Colonic mucosa (tissue), 4 donors: ENCODE measurements at regions of chr3 and their contacts with region 1.

Region 1: DNA sequence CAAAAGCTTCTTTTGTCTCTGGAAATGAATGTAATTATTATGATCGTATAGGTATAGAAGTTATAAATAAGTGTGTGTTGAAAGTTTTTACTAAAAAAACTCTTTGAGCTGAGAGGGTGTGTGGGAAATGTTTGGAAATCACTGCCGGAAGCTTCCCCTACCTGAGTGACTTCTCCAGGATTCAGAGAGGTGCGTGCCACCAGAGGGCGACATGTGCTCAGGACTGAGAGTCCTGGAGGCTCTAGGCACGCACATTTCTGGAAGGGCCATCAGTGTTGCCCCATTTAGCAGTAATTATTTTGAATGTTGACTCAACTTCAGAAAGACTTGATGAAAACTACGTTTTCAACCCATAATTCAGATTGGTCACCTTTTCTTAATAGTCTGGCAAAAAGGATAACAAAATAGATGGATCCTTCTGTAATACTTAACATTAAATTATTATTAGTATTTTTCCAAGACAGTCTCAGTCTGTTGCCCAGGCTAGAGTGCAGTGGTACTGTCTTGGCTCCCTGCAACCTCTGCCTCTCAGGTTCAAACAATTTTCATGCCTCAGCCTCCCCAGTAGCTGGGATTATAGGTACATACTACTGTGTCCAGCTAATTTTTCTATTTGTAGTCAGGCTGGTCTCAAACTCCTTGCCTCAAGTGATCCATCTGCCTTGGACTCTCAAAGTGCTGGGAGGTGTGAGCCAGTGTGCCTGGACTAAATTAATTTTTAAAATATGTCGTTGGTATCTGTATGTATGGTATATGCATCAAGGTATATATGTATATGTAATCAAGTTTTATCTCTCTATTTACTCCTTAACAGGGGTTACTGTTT is 34.5 kb downstream of the GPR171 start:
- DNase-seq: peak; percentile 89
- H3K4me3 ChIP-seq: no peak overlapping the region
- H3K27ac ChIP-seq: no peak overlapping the region
- H3K4me1 ChIP-seq: no peaks in the 10 kb centered on the region
- H3K27me3 ChIP-seq: no peaks in the 10 kb centered on the region
- CTCF ChIP-seq: peak; percentile 86

Region 2: GRCh38 chr3:151227807-151228665 is 59.6 kb after region 1 on chr3:
- intact Hi-C with region 1: loop called (anchors 5 kb)
- DNase-seq: peak; percentile 81
- H3K4me3 ChIP-seq: no peak overlapping the region
- H3K27ac ChIP-seq: peak overlapping the region; percentile 34
- H3K4me1 ChIP-seq: no peaks in the 10 kb centered on the region
- H3K27me3 ChIP-seq: no peaks in the 10 kb centered on the region
- CTCF ChIP-seq: peak; percentile 89

Region 3: DNA sequence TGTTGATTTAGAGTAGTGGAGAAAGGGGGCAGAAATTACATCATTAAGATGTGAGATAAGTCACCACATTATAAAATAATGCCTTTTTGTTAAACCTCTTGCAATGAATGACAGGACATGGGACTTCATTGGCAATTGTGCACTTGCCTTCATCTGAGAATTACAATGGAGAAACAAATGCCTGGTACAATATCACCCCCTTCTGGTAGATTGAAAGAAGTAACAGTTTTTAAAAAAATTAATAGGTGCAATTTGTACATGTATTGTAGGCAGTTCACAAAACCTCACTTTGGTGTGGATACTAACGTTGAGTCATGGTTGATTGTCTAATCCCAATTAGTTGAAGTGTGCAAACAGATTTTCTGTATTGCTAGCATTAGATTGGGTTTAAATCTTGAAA is 114.4 kb after region 1 on chr3:
- intact Hi-C with region 1: loop called (anchors 2 kb)
- DNase-seq: no peak
- H3K4me3 ChIP-seq: no peak overlapping the region
- H3K27ac ChIP-seq: no peak overlapping the region
- H3K4me1 ChIP-seq: peaks cover 2% of the 10 kb centered on the region
- H3K27me3 ChIP-seq: no peaks in the 10 kb centered on the region
- CTCF ChIP-seq: peak; percentile 68

Region 4: DNA sequence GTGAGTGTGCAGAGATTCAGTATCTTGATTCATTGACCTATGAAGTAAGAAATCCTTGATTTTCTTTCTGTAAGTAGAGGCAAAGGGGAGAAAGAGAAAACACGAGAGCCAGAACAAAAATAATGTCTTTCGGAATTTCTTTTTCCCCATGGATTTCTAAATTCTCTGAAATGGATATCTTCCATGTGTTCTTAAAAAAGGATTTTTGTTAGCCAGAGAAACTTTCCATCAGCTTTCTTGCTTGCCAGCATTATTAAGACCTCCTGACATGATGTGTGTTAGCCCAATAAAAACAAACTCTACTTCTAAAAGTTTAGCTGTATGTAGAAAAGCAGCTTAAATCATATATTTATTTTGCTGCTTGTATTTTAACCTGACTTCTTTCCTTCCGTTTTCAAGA is 442.9 kb after region 1 on chr3:
- intact Hi-C with region 1: no loop called
- DNase-seq: no peak
- H3K4me3 ChIP-seq: no peak overlapping the region
- H3K27ac ChIP-seq: no peak overlapping the region
- H3K4me1 ChIP-seq: no peaks in the 10 kb centered on the region
- H3K27me3 ChIP-seq: no peaks in the 10 kb centered on the region
- CTCF ChIP-seq: no peak